MCF 10A (cell line): ENCODE measurements at regions of chr1 and their contacts with region 1.

Region 1: GRCh38 chr1:197399755-197400527 is 131.9 kb downstream of the CRB1 start:
- DNase-seq: peak; percentile 82
- H3K4me3 Mint-ChIP-seq: no peak overlapping the region
- H3K27ac Mint-ChIP-seq: no peak overlapping the region
- H3K4me1 Mint-ChIP-seq: no peaks in the 10 kb centered on the region
- H3K27me3 Mint-ChIP-seq: peaks cover 13% of the 10 kb centered on the region
- CTCF ChIP-seq: peak; percentile 63

Region 2: GRCh38 chr1:197024460-197024859 is 375.5 kb before region 1 on chr1:
- CTCF ChIA-PET with region 1: no interaction called
- POLR2A ChIA-PET with region 1: no interaction called
- intact Hi-C with region 1: no loop called
- DNase-seq: no peak
- H3K4me3 Mint-ChIP-seq: no peak overlapping the region
- H3K27ac Mint-ChIP-seq: no peak overlapping the region
- H3K4me1 Mint-ChIP-seq: no peaks in the 10 kb centered on the region
- H3K27me3 Mint-ChIP-seq: no peaks in the 10 kb centered on the region
- CTCF ChIP-seq: no peak

Region 3: DNA sequence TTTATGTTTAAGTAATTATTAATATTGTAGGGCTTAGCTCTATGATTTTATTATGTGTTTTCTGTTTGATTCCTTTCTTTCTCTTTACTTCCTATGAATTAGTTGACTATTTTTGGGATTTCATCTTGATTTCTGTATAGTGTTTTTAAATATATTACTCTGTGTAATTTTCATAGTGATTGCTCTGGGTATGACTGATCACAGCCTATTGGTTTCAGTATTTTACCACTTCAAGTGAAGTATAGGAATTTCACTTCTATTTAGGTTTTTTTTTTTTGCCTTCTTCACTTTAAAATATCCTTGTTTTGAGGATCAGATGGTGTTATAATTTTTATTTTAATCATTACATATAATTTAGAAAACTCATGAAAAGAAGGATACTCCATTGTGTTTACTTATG is 37.1 kb before region 1 on chr1:
- CTCF ChIA-PET with region 1: no interaction called
- POLR2A ChIA-PET with region 1: no interaction called
- intact Hi-C with region 1: no loop called
- DNase-seq: no peak
- H3K4me3 Mint-ChIP-seq: no peak overlapping the region
- H3K27ac Mint-ChIP-seq: no peak overlapping the region
- H3K4me1 Mint-ChIP-seq: no peaks in the 10 kb centered on the region
- H3K27me3 Mint-ChIP-seq: no peaks in the 10 kb centered on the region
- CTCF ChIP-seq: no peak

Region 4: GRCh38 chr1:197384471-197384870 is 15.5 kb before region 1 on chr1:
- CTCF ChIA-PET with region 1: interaction called, 21 read pairs
- POLR2A ChIA-PET with region 1: no interaction called
- intact Hi-C with region 1: no loop called
- DNase-seq: no peak
- H3K4me3 Mint-ChIP-seq: no peak overlapping the region
- H3K27ac Mint-ChIP-seq: no peak overlapping the region
- H3K4me1 Mint-ChIP-seq: no peaks in the 10 kb centered on the region
- H3K27me3 Mint-ChIP-seq: no peaks in the 10 kb centered on the region
- CTCF ChIP-seq: no peak

Region 5: GRCh38 chr1:197413564-197413963 is 13.6 kb after region 1 on chr1:
- CTCF ChIA-PET with region 1: interaction called, 20 read pairs
- POLR2A ChIA-PET with region 1: interaction called, 3 read pairs
- intact Hi-C with region 1: no loop called
- DNase-seq: no peak
- H3K4me3 Mint-ChIP-seq: no peak overlapping the region
- H3K27ac Mint-ChIP-seq: no peak overlapping the region
- H3K4me1 Mint-ChIP-seq: no peaks in the 10 kb centered on the region
- H3K27me3 Mint-ChIP-seq: no peaks in the 10 kb centered on the region
- CTCF ChIP-seq: no peak

Region 6: GRCh38 chr1:197464044-197464443 is 64.1 kb after region 1 on chr1:
- CTCF ChIA-PET with region 1: interaction called, 7 read pairs
- POLR2A ChIA-PET with region 1: no interaction called
- intact Hi-C with region 1: loop called (anchors 2 kb)
- DNase-seq: peak; percentile 87
- H3K4me3 Mint-ChIP-seq: peak overlapping the region; percentile 42
- H3K27ac Mint-ChIP-seq: peak overlapping the region; percentile 95
- H3K4me1 Mint-ChIP-seq: peaks cover 17% of the 10 kb centered on the region
- H3K27me3 Mint-ChIP-seq: no peaks in the 10 kb centered on the region
- CTCF ChIP-seq: no peak

Region 7: GRCh38 chr1:197924516-197925123 is 524.7 kb after region 1 on chr1:
- CTCF ChIA-PET with region 1: no interaction called
- POLR2A ChIA-PET with region 1: no interaction called
- intact Hi-C with region 1: loop called (anchors 1 kb)
- DNase-seq: peak; percentile 84
- H3K4me3 Mint-ChIP-seq: no peak overlapping the region
- H3K27ac Mint-ChIP-seq: no peak overlapping the region
- H3K4me1 Mint-ChIP-seq: peaks cover 5% of the 10 kb centered on the region
- H3K27me3 Mint-ChIP-seq: no peaks in the 10 kb centered on the region
- CTCF ChIP-seq: peak; percentile 84

Region 8: GRCh38 chr1:198699167-198700015 is 1299.5 kb after region 1 on chr1:
- CTCF ChIA-PET with region 1: interaction called, 4 read pairs
- POLR2A ChIA-PET with region 1: no interaction called
- intact Hi-C with region 1: loop called (anchors 1 kb)
- DNase-seq: peak; percentile 81
- H3K4me3 Mint-ChIP-seq: no peak overlapping the region
- H3K27ac Mint-ChIP-seq: no peak overlapping the region
- H3K4me1 Mint-ChIP-seq: peaks cover 10% of the 10 kb centered on the region
- H3K27me3 Mint-ChIP-seq: no peaks in the 10 kb centered on the region
- CTCF ChIP-seq: peak; percentile 96